IMR-90 (cell line): ENCODE measurements at regions of chr15 and their contacts with region 1.

Region 1: GRCh38 chr15:86229936-86230335 is 150.3 kb downstream of the AGBL1 start:
- DNase-seq: no peak
- ATAC-seq: no peak
- H3K4me3 ChIP-seq: no peak overlapping the region
- H3K27ac ChIP-seq: no peak overlapping the region
- H3K4me1 ChIP-seq: no peaks in the 10 kb centered on the region
- H3K27me3 ChIP-seq: no peaks in the 10 kb centered on the region
- CTCF ChIP-seq: no peak
- POLR2A ChIP-seq: no peak
- RAD21 ChIP-seq: no peak

Region 2: DNA sequence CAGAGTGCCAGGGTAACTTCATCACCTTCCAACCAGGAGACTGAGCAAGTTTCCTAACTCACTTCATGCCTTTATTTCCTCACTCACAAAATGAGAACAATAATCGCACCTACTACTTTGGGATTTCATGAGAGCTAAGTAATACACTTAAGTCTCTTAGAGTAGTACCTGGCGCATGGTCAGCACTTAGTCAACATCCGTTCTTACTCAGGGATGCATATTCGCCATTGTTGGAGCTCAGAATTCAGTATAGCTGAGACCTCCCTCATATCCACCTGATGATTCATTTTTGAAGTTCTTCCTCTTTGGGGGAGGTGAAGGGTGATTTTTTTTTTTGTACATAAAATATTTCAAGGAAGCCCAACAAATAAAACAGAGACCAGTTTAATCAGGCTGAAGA is 38.0 kb after region 1 on chr15:
- CTCF ChIA-PET with region 1: no interaction called
- POLR2A ChIA-PET with region 1: no interaction called
- dilution Hi-C with region 1: no loop called
- in situ Hi-C with region 1: no loop called
- intact Hi-C with region 1: no loop called
- DNase-seq: no peak
- ATAC-seq: no peak
- H3K4me3 ChIP-seq: no peak overlapping the region
- H3K27ac ChIP-seq: no peak overlapping the region
- H3K4me1 ChIP-seq: no peaks in the 10 kb centered on the region
- H3K27me3 ChIP-seq: no peaks in the 10 kb centered on the region
- CTCF ChIP-seq: no peak
- POLR2A ChIP-seq: no peak
- RAD21 ChIP-seq: no peak

Region 3: GRCh38 chr15:86284635-86285034 is 54.7 kb after region 1 on chr15:
- CTCF ChIA-PET with region 1: no interaction called
- POLR2A ChIA-PET with region 1: no interaction called
- dilution Hi-C with region 1: no loop called
- in situ Hi-C with region 1: loop called (anchors 10 kb)
- intact Hi-C with region 1: no loop called
- DNase-seq: no peak
- ATAC-seq: no peak
- H3K4me3 ChIP-seq: no peak overlapping the region
- H3K27ac ChIP-seq: no peak overlapping the region
- H3K4me1 ChIP-seq: no peaks in the 10 kb centered on the region
- H3K27me3 ChIP-seq: no peaks in the 10 kb centered on the region
- CTCF ChIP-seq: no peak
- POLR2A ChIP-seq: no peak
- RAD21 ChIP-seq: no peak